PC-3 (cell line): ENCODE measurements at regions of chr11 and their contacts with region 1.

Region 1: DNA sequence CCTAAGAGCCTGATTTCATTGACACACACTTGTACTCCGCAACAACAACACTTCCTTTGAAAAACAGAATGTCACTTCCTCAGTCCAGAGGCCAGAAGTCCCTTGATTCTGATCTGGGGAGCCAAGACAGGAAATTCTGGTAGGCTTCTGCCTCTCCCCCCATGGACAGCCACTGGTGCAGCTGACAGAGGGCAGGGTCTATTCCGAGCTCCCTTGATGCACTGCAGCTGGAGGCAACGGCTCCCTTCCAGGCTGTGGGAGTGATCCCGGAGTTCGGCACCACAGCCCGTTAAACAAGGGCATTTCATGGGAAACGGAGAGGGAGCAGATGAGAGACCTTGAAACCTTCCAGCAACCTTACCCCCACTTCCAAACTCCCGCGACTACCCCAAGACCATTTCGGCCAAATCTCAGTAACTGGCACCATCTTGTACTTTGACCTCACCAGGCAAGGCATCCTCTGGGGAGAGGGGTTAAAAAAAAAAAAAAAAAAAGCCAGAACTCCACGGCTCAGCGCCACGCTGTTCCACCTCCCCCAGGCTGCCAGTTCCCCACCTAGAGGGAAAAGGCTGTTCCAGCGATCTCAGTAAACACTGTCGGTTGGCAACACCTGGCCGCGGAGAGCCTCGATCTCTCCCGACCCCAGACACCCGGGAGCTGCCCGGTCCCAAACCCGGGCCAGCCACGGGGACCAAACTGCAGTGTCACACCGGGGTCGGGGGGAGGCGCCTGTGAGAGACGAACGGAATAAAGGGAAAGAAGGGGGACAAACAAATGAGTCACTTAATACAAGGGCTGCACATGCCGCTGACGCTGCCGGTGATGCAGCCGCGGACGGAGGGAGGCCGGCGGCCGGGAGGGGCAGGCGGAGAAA is 1.1 kb downstream of the GAB2 start:
- DNase-seq: peak; percentile 90
- ATAC-seq: peak; percentile 45
- H3K4me3 ChIP-seq: peak overlapping the region; percentile 70
- H3K27ac ChIP-seq: peak overlapping the region; percentile 63
- H3K4me1 ChIP-seq: peaks cover 33% of the 10 kb centered on the region
- H3K27me3 ChIP-seq: no peaks in the 10 kb centered on the region
- CTCF ChIP-seq: peak; percentile 73

Region 2: DNA sequence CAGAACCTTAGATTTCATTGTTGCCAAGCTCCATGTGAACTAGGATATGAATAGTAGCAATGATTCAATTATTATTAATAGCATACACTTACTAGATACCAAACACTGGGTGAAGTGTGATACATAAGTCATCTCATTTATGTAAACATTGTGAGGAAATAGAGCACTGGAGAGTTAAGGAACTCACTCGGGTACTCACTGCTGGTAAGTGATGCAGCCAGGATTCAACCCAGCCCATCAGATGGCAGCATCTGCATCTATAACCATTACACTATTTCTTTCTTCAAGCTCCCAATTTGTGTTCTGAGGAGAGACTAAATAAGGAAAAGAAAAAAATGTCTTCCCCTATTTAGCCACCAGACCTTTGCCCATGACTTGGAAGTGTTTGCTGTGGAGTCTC is 266.9 kb before region 1 on chr11:
- CTCF ChIA-PET with region 1: interaction called, 3 read pairs
- POLR2A ChIA-PET with region 1: no interaction called
- intact Hi-C with region 1: loop called (anchors 2 kb)
- DNase-seq: peak; percentile 92
- ATAC-seq: peak; percentile 100
- H3K4me3 ChIP-seq: no peak overlapping the region
- H3K27ac ChIP-seq: peak overlapping the region; percentile 72
- H3K4me1 ChIP-seq: peaks cover 8% of the 10 kb centered on the region
- H3K27me3 ChIP-seq: no peaks in the 10 kb centered on the region
- CTCF ChIP-seq: peak; percentile 76

Region 3: DNA sequence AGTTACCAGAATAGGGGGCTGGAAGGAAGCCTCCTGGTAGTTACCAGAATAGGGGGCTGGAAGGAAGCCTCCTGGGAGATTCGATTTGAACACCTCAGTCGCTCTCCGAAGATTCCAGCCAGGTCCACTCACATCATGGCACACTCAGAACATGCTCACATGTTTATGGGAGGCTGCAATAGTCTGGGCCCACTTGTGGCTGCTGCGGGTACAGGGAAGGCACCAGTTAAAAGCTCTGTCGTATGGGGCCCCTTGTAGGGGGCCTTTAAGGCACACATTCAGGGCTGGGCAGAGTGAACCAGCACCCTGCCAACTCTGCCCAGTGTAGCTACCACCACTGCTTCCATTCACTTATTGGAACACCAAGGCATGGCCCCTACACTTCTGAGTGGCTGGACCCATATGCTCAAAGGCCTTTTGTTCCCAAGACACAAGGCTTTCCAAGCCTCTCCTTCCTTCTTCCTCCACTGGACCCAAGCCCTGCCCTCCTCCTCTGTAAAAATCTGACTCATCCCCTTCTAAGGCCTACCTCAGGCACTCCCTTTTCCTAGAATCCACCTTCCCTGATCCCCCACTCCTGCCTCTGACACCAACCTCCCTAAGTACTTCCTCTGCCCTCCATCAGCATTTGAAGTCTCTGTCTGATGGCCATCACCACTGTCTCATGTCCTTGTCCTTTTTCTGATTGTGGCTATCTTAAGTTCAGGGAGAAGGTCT is 199.8 kb before region 1 on chr11:
- CTCF ChIA-PET with region 1: no interaction called
- POLR2A ChIA-PET with region 1: interaction called, 14 read pairs
- intact Hi-C with region 1: no loop called
- DNase-seq: peak; percentile 66
- ATAC-seq: peak; percentile 97
- H3K4me3 ChIP-seq: no peak overlapping the region
- H3K27ac ChIP-seq: peak overlapping the region; percentile 34
- H3K4me1 ChIP-seq: peaks cover 11% of the 10 kb centered on the region
- H3K27me3 ChIP-seq: no peaks in the 10 kb centered on the region
- CTCF ChIP-seq: no peak

Region 4: GRCh38 chr11:78228467-78228866 is 188.1 kb before region 1 on chr11:
- CTCF ChIA-PET with region 1: interaction called, 16 read pairs
- POLR2A ChIA-PET with region 1: no interaction called
- intact Hi-C with region 1: loop called (anchors 1 kb)
- DNase-seq: peak; percentile 86
- ATAC-seq: peak; percentile 81
- H3K4me3 ChIP-seq: no peak overlapping the region
- H3K27ac ChIP-seq: no peak overlapping the region
- H3K4me1 ChIP-seq: peaks cover 11% of the 10 kb centered on the region
- H3K27me3 ChIP-seq: no peaks in the 10 kb centered on the region
- CTCF ChIP-seq: peak; percentile 87

Region 5: DNA sequence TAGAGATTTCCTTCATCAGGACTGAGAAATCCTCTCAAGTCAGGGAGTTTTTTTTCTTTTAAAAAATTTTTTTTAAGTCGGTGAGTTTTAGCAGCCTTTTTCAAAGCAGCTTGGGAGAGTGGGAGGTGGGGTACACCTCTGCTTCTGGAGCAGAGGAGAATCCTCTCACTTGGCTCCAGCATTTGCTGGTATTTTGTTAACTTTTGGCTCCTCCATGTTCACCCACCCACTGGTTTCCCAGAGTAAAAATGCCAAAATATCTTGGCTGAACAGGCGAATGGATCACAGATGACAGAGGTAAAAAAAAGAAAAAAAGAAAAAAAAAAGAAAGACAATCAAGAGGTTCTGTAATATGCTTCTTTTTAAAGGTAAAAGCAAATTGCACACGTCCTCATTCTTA is 66.9 kb before region 1 on chr11:
- CTCF ChIA-PET with region 1: no interaction called
- POLR2A ChIA-PET with region 1: no interaction called
- intact Hi-C with region 1: loop called (anchors 2 kb)
- DNase-seq: no peak
- ATAC-seq: no peak
- H3K4me3 ChIP-seq: no peak overlapping the region
- H3K27ac ChIP-seq: no peak overlapping the region
- H3K4me1 ChIP-seq: peaks cover 23% of the 10 kb centered on the region
- H3K27me3 ChIP-seq: no peaks in the 10 kb centered on the region
- CTCF ChIP-seq: no peak

Region 6: GRCh38 chr11:78564490-78565467 is 148.2 kb after region 1 on chr11:
- CTCF ChIA-PET with region 1: interaction called, 20 read pairs
- POLR2A ChIA-PET with region 1: no interaction called
- intact Hi-C with region 1: loop called (anchors 1 kb)
- DNase-seq: peak; percentile 91
- ATAC-seq: peak; percentile 15; the same call in 1 of the 2 replicates
- H3K4me3 ChIP-seq: no peak overlapping the region
- H3K27ac ChIP-seq: no peak overlapping the region
- H3K4me1 ChIP-seq: peaks cover 62% of the 10 kb centered on the region
- H3K27me3 ChIP-seq: no peaks in the 10 kb centered on the region
- CTCF ChIP-seq: peak; percentile 89

Region 7: DNA sequence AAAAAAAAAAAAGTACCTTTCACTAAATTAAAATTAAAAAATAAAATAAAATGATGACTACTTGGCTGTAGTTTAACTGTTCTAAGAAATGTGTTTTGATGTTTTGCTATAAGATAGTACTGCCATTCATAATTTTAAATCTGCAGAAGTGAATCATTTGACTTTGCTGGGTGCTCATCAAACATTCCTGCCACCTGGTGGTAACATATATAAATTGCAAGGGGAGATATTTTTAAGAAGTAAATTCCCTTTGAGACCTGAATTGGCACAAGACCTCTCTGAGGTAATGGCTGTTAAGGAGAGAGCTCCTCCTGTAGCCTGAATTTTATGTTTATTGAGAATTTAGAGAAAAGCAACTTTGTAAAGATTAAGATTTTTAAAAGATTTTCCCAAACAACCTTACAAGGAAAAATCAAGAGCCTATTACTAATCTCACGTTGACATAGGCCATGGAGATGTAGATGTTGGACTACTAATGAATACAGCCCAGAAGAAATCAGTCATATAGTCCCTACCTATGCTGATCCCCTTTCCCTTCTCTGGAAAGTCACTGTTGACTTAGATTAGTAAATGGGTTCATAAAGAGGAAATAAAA is 170.0 kb after region 1 on chr11:
- CTCF ChIA-PET with region 1: interaction called, 11 read pairs
- POLR2A ChIA-PET with region 1: no interaction called
- intact Hi-C with region 1: no loop called
- DNase-seq: peak; percentile 62
- ATAC-seq: peak; percentile 56
- H3K4me3 ChIP-seq: no peak overlapping the region
- H3K27ac ChIP-seq: no peak overlapping the region
- H3K4me1 ChIP-seq: no peaks in the 10 kb centered on the region
- H3K27me3 ChIP-seq: peaks cover 14% of the 10 kb centered on the region; the same call in 1 of the 2 replicates
- CTCF ChIP-seq: peak; percentile 80